Activated CD4-positive, alpha-beta memory T cell treated with anti-CD3 and anti-CD28 coated beads for 36 hours (primary cell): ENCODE measurements at regions of chr2 and their contacts with region 1.

Region 1: GRCh38 chr2:60881047-60881932 is at the start of gene REL:
- DNase-seq: peak; percentile 94
- H3K4me3 Mint-ChIP-seq: peak within 1 kb of the TSS; percentile 100
- H3K27ac Mint-ChIP-seq: peak within 1 kb of the TSS; percentile 96
- H3K4me1 Mint-ChIP-seq: peaks cover 27% of the 10 kb centered on the region
- H3K27me3 Mint-ChIP-seq: no peaks in the 10 kb centered on the region
- total RNA-seq, gene REL: 37.1 to 38.1 TPM

Region 2: DNA sequence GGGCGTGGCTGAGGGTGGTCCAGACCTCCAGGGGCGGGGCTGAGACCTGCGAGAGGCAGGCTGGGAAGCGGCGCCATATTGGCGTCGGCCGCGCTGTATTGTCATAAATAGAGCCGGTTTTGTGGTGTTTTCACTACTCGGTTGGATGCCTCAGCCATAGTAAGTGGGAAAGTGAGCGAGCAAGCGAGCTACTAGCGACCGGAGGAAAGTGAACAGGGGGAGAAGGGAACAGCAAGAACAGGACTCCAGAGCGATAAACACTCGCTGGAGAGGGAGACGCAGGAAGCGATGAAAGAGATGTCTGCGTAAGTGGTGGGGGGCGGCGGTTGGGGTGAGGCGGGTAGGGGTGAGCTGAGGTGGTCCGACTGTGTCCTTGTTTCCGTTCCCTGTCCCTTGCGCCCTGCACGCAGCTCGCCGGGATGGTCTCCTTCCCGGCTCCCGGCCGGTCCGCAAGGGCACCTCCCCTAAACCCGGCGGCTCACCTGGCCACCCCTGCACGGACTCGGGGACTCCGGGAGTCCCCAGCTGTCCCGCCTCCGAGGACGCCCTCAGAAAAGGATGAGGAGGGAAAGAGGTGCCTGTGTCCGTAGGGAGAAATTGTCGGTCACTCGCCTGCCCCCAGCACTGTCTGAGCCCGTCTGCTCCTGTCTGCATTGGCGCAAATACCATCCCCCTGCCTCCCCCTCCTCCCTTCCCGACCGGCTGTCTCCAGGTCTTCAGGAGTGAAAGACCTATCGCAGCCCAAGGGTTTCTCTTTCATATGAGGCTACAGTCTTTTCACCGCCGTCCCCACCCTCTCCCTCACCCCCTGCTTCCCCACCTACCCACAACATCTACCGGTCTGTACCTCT is 124.9 kb before region 1 on chr2 and contains the start of gene PAPOLG:
- CTCF ChIA-PET with region 1: no interaction called
- POLR2A ChIA-PET with region 1: interaction called, 9 read pairs
- intact Hi-C with region 1: loop called (anchors 2 kb)
- DNase-seq: peak; percentile 98
- H3K4me3 Mint-ChIP-seq: peak within 1 kb of the TSS; percentile 99
- H3K27ac Mint-ChIP-seq: peak within 1 kb of the TSS; percentile 96
- H3K4me1 Mint-ChIP-seq: peaks cover 39% of the 10 kb centered on the region
- H3K27me3 Mint-ChIP-seq: no peaks in the 10 kb centered on the region
- total RNA-seq, gene PAPOLG: 14.4 to 15.7 TPM

Region 3: GRCh38 chr2:60899230-60899891 is 18.1 kb after region 1 on chr2:
- CTCF ChIA-PET with region 1: interaction called, 4 read pairs
- POLR2A ChIA-PET with region 1: interaction called, 13 read pairs
- intact Hi-C with region 1: loop called (anchors 1 kb)
- DNase-seq: peak; percentile 74
- H3K4me3 Mint-ChIP-seq: peak overlapping the region; percentile 43
- H3K27ac Mint-ChIP-seq: peak overlapping the region; percentile 85
- H3K4me1 Mint-ChIP-seq: peaks cover 31% of the 10 kb centered on the region
- H3K27me3 Mint-ChIP-seq: no peaks in the 10 kb centered on the region

Region 4: DNA sequence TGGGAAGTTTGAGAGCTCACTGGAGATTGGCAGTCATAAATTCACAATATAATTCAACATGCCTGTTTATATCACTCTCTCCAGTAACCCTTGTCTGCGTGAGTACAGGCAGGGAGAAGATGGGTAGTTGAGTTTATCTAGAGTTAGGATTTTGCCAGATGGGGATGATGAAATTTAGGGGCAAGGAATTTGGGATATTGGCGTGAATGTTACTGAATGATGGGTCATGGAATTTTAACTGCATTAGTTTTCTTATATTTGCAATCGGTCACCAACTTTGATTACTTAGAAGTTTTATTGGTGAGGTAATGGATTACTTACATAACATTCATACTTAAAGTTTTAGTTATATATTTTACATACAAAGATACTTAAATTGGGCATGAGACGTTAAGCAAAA is 219.5 kb after region 1 on chr2:
- CTCF ChIA-PET with region 1: no interaction called
- POLR2A ChIA-PET with region 1: no interaction called
- intact Hi-C with region 1: no loop called
- DNase-seq: no peak
- H3K4me3 Mint-ChIP-seq: no peak overlapping the region
- H3K27ac Mint-ChIP-seq: no peak overlapping the region
- H3K4me1 Mint-ChIP-seq: no peaks in the 10 kb centered on the region
- H3K27me3 Mint-ChIP-seq: no peaks in the 10 kb centered on the region

Region 5: GRCh38 chr2:61176755-61177726 is 295.8 kb after region 1 on chr2:
- CTCF ChIA-PET with region 1: no interaction called
- POLR2A ChIA-PET with region 1: no interaction called
- intact Hi-C with region 1: loop called (anchors 2 kb)
- DNase-seq: peak; percentile 95
- H3K4me3 Mint-ChIP-seq: peak overlapping the region; percentile 89
- H3K27ac Mint-ChIP-seq: peak overlapping the region; percentile 94
- H3K4me1 Mint-ChIP-seq: peaks cover 47% of the 10 kb centered on the region
- H3K27me3 Mint-ChIP-seq: no peaks in the 10 kb centered on the region

Region 6: GRCh38 chr2:62306751-62307468 is 1425.6 kb after region 1 on chr2:
- CTCF ChIA-PET with region 1: no interaction called
- POLR2A ChIA-PET with region 1: no interaction called
- intact Hi-C with region 1: loop called (anchors 5 kb)
- DNase-seq: peak; percentile 73
- H3K4me3 Mint-ChIP-seq: peak overlapping the region; percentile 22
- H3K27ac Mint-ChIP-seq: peak overlapping the region; percentile 72
- H3K4me1 Mint-ChIP-seq: peaks cover 75% of the 10 kb centered on the region
- H3K27me3 Mint-ChIP-seq: no peaks in the 10 kb centered on the region